K562 (cell line): ENCODE measurements at regions of chr1 and their contacts with region 1.

Region 1: DNA sequence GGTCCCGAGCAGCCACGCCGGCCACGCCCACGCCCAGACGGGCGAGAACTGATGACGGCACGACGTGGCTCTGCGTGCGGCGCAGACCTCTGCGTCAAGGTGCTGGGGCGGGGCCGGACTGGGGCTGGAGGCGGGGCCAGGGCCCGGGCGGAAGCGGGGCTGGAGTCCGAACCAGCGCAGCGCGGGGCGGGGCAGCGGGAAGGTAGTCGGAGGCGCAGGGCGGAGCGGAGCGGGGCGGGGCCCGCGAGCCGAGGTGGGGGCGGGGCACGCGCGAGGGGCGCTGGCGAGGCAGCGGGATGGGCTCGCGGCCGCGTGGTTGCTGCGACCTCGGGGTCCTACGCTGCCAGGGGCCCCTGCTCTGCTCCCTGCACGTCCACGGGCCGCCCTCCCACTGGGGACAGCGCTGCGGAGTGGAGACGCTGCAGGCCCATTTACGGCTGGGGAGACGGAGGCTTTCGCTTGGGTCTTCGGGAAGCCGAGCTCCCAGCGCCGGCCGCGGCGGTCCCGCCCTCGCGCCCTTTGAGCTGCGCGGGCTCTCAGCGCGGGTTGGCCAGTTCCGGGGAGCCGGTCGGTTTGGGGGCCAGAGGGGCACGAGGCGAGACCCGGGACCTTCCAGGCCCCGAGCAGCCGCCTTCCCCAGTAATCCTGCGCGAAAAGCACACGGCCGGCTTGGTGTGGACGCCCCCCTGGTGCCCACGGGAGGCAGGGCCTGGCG is at the start of gene PEX10:
- DNase-seq: peak; percentile 96 to 99 (median 98)
- ATAC-seq: peak; percentile 93
- H3K4me3 ChIP-seq: peak within 1 kb of the TSS; percentile 100
- H3K27ac ChIP-seq: peak within 1 kb of the TSS; percentile 90
- H3K4me1 ChIP-seq: peaks cover 15 to 82% of the 10 kb centered on the region in 2 experiments
- H3K27me3 ChIP-seq: no peaks in the 10 kb centered on the region; a peak in 2 of 5 replicates
- CTCF ChIP-seq: 0 out of 6 replicates have a peak, but pooled peaks of 1 of the 3 experiments have one; percentile 4
- EP300 ChIP-seq: no peak
- POLR2A ChIP-seq: peak; percentile 74
- RAD21 ChIP-seq: peak in 1 of 2 experiments; percentile 4; a peak in 1 of 4 replicates
- polyA plus RNA-seq, gene PEX10: 0.03 to 0.11 TPM

Region 2: GRCh38 chr1:2206813-2207487 is 205.7 kb before region 1 on chr1:
- CTCF ChIA-PET with region 1: no interaction called
- POLR2A ChIA-PET with region 1: no interaction called
- in situ Hi-C with region 1: no loop called
- intact Hi-C with region 1: no loop called
- DNase-seq: peak; percentile 57 to 85 (median 63)
- ATAC-seq: peak; percentile 51
- H3K4me3 ChIP-seq: peak overlapping the region; percentile 12; the same call in 1 of the 2 replicates
- H3K27ac ChIP-seq: peak overlapping the region; percentile 36; the same call in 1 of the 3 replicates
- H3K4me1 ChIP-seq: peaks cover 27 to 81% of the 10 kb centered on the region in 2 experiments
- H3K27me3 ChIP-seq: no peaks in the 10 kb centered on the region
- CTCF ChIP-seq: no peak
- EP300 ChIP-seq: no peak
- POLR2A ChIP-seq: no peak
- RAD21 ChIP-seq: no peak

Region 3: DNA sequence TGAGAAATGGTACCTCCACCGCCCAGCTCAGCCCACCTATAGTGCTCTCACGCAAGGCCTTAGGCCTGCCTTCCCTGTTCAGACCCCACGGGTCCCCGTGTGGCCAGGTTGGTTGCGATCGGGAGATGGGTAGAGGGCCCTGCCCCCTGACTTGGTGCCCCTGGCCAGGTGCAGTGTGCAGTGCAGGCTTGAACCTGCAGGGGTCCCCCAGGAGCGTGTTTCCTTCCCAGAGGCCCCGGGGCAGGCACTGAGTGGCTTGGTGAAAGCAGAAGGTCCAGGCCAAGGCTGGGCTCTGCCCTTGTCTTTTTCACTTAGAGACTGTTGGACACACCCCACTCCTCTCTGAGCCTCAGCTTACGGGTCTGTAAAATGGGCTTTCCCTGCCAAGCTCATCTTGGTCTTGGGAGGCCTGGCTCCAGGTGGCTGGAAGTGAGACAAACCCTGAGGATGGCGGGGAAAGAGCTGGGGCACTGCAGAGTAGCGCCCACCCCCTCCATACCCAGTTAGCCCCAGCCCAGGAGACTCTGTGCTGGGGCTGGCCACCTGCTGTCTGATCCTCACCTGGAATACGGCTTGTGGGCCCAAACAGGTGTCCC is 126.7 kb after region 1 on chr1:
- CTCF ChIA-PET with region 1: no interaction called
- POLR2A ChIA-PET with region 1: interaction called, 3 read pairs
- in situ Hi-C with region 1: loop called (anchors 5 kb)
- intact Hi-C with region 1: no loop called
- DNase-seq: peak in 3 of 4 experiments; percentile 51 to 69 (median 64)
- ATAC-seq: peak; percentile 73
- H3K4me3 ChIP-seq: no peak overlapping the region
- H3K27ac ChIP-seq: no peak overlapping the region
- H3K4me1 ChIP-seq: peaks cover 38 to 81% of the 10 kb centered on the region in 2 experiments
- H3K27me3 ChIP-seq: peaks cover 10 to 36% of the 10 kb centered on the region in 2 experiments; a peak in 4 of 5 replicates
- CTCF ChIP-seq: peak; percentile 58 to 71 (median 64)
- EP300 ChIP-seq: no peak
- POLR2A ChIP-seq: no peak
- RAD21 ChIP-seq: peak in 1 of 2 experiments; percentile 60; a peak in 2 of 4 replicates

Region 4: GRCh38 chr1:2632561-2633361 is 220.1 kb after region 1 on chr1 and contains the start of gene MMEL1:
- CTCF ChIA-PET with region 1: no interaction called
- POLR2A ChIA-PET with region 1: no interaction called
- in situ Hi-C with region 1: loop called (anchors 10 kb)
- intact Hi-C with region 1: no loop called
- DNase-seq: no peak
- ATAC-seq: peak; percentile 57
- H3K4me3 ChIP-seq: no peak within 1 kb of the TSS
- H3K27ac ChIP-seq: no peak within 1 kb of the TSS
- H3K4me1 ChIP-seq: peaks cover 0 to 17% of the 10 kb centered on the region in 2 experiments; a peak in 1 of 5 replicates
- H3K27me3 ChIP-seq: peaks cover 0 to 5% of the 10 kb centered on the region in 2 experiments; a peak in 2 of 5 replicates
- CTCF ChIP-seq: no peak
- EP300 ChIP-seq: no peak
- POLR2A ChIP-seq: no peak
- RAD21 ChIP-seq: no peak
- polyA plus RNA-seq, gene MMEL1: not detected

Region 5: DNA sequence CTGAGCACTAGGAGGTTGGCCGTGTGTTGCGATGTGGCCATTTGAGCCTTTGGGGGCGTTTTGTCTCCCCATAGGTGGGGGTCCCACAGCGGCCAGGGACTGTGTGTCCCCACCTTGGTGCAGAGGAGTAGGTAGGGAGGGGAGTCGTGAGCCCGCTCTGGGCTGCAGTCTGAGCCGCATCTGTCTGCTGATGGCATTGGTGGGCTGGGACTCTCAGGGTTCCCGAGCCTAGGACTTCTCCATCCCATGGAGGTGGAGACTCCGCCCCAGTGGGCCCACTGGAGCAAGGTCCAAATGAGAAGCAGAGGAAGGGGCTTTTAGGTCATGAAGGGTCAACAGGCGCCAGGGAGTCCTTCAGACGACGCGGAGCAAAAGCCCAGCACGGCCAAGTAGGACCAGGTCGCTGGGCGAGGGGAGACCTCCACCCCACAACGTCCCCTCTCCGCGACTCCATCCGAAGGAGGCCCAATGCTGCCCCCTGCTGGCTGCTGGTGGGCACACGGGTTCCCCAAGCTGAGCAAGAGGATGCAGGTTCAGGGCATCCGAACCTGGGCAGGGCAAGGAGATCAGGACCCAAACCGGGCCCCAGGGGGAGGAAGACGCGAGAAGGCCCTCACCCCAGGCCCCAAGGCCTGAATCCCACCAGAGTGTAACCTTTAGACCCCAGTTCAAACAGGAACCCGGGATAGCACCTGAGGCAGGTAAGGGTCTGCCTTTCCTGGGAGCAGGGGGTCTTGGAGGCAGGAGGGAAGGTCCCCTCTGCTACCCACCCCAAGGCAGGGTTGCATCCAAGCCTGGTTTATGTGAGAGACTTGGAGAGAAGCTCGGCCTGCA is 373.9 kb after region 1 on chr1:
- CTCF ChIA-PET with region 1: interaction called, 7 read pairs
- POLR2A ChIA-PET with region 1: no interaction called
- in situ Hi-C with region 1: no loop called
- intact Hi-C with region 1: loop called (anchors 2 kb)
- DNase-seq: peak; percentile 50 to 70 (median 66)
- ATAC-seq: peak; percentile 91
- H3K4me3 ChIP-seq: no peak overlapping the region
- H3K27ac ChIP-seq: no peak overlapping the region
- H3K4me1 ChIP-seq: no peaks in the 10 kb centered on the region; a peak in 1 of 5 replicates
- H3K27me3 ChIP-seq: no peaks in the 10 kb centered on the region
- CTCF ChIP-seq: peak; percentile 67 to 85 (median 69)
- EP300 ChIP-seq: no peak
- POLR2A ChIP-seq: no peak
- RAD21 ChIP-seq: peak; percentile 61 to 71

Region 6: DNA sequence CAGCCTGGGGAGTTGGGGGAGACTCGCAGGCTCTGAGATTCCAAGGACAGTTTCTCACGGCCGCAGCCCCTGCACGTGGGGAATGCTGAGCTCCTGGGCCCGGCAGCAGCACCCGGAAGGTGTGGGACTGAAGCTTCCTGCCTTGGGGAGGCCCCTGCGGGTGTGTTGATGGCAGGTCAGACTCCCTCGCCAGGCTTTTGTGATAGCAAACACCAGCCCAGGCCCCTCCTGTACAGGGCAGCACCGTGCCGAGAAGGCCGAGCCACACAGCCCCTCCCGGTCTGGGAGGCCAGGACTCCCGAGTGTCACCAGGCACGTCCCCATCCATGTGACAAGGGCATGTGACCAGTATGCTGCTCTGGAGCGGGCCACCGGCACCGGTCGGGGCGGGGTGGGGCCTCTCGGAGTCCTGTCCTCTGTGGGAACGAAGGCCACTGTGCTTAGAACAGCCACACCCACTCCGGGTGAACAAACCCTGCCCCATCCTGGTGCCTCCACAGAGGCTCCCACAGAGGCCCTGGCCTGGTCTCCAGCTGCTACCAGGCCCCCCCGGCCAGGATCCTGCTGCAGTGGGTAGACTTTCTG is 1010.7 kb after region 1 on chr1:
- CTCF ChIA-PET with region 1: interaction called, 8 read pairs
- POLR2A ChIA-PET with region 1: no interaction called
- in situ Hi-C with region 1: no loop called
- intact Hi-C with region 1: loop called (anchors 10 kb)
- DNase-seq: peak in 2 of 4 experiments; percentile 27 to 28
- ATAC-seq: no peak; the same call in 2 of the 3 replicates
- H3K4me3 ChIP-seq: no peak overlapping the region
- H3K27ac ChIP-seq: no peak overlapping the region
- H3K4me1 ChIP-seq: peaks cover 0 to 21% of the 10 kb centered on the region in 2 experiments; a peak in 2 of 5 replicates
- H3K27me3 ChIP-seq: peaks cover 7 to 71% of the 10 kb centered on the region in 2 experiments
- CTCF ChIP-seq: no peak
- EP300 ChIP-seq: no peak
- POLR2A ChIP-seq: no peak
- RAD21 ChIP-seq: no peak